ENCODE measurements at regions of chr9 and their contacts with region 1.

Region 1: GRCh38 chr9:32579706-32580331 is 6.9 kb upstream of the NDUFB6 start:
- DNase-seq: peak; percentile 77
- H3K4me3 ChIP-seq: peak overlapping the region in 1 of 4 donors; percentile 6
- H3K27ac ChIP-seq: no peak overlapping the region
- H3K4me1 ChIP-seq: peaks cover 0 to 8% (median 0%) of the 10 kb centered on the region in 4 donors
- H3K27me3 ChIP-seq: no peaks in the 10 kb centered on the region
- CTCF ChIP-seq: peak; percentile 43 to 91 (median 78)
- EP300 ChIP-seq: no peak
- POLR2A ChIP-seq: no peak

Region 2: GRCh38 chr9:32350682-32351081 is 229.1 kb before region 1 on chr9:
- intact Hi-C with region 1: no loop called
- DNase-seq: no peak
- H3K4me3 ChIP-seq: no peak overlapping the region
- H3K27ac ChIP-seq: no peak overlapping the region
- H3K4me1 ChIP-seq: peaks cover 0 to 32% (median 17%) of the 10 kb centered on the region in 4 donors
- H3K27me3 ChIP-seq: no peaks in the 10 kb centered on the region
- CTCF ChIP-seq: peak in 3 of 4 experiments; percentile 19 to 33 (median 31)
- EP300 ChIP-seq: no peak
- POLR2A ChIP-seq: no peak

Region 3: GRCh38 chr9:32378993-32379729 is 200.7 kb before region 1 on chr9:
- intact Hi-C with region 1: loop called (anchors 1 kb)
- DNase-seq: no peak
- H3K4me3 ChIP-seq: no peak overlapping the region
- H3K27ac ChIP-seq: no peak overlapping the region
- H3K4me1 ChIP-seq: peaks cover 0 to 11% (median 6%) of the 10 kb centered on the region in 4 donors
- H3K27me3 ChIP-seq: no peaks in the 10 kb centered on the region
- CTCF ChIP-seq: peak; percentile 63 to 82 (median 72)
- EP300 ChIP-seq: no peak
- POLR2A ChIP-seq: no peak

Region 4: GRCh38 chr9:32543047-32543446 is 36.8 kb before region 1 on chr9:
- intact Hi-C with region 1: no loop called
- DNase-seq: no peak
- H3K4me3 ChIP-seq: no peak overlapping the region
- H3K27ac ChIP-seq: no peak overlapping the region
- H3K4me1 ChIP-seq: peaks cover 0 to 11% (median 2%) of the 10 kb centered on the region in 4 donors
- H3K27me3 ChIP-seq: no peaks in the 10 kb centered on the region
- CTCF ChIP-seq: no peak
- EP300 ChIP-seq: no peak
- POLR2A ChIP-seq: no peak

Region 5: GRCh38 chr9:32558408-32558934 is 21.3 kb before region 1 on chr9:
- intact Hi-C with region 1: no loop called
- DNase-seq: no peak
- H3K4me3 ChIP-seq: no peak overlapping the region
- H3K27ac ChIP-seq: no peak overlapping the region
- H3K4me1 ChIP-seq: peaks cover 0 to under 1% (median 0%) of the 10 kb centered on the region in 4 donors
- H3K27me3 ChIP-seq: no peaks in the 10 kb centered on the region
- CTCF ChIP-seq: no peak
- EP300 ChIP-seq: no peak
- POLR2A ChIP-seq: no peak

Measured in sigmoid colon (tissue), 7 donors.